ENCODE measurements at regions of chr3 and their contacts with region 1.

Region 1: DNA sequence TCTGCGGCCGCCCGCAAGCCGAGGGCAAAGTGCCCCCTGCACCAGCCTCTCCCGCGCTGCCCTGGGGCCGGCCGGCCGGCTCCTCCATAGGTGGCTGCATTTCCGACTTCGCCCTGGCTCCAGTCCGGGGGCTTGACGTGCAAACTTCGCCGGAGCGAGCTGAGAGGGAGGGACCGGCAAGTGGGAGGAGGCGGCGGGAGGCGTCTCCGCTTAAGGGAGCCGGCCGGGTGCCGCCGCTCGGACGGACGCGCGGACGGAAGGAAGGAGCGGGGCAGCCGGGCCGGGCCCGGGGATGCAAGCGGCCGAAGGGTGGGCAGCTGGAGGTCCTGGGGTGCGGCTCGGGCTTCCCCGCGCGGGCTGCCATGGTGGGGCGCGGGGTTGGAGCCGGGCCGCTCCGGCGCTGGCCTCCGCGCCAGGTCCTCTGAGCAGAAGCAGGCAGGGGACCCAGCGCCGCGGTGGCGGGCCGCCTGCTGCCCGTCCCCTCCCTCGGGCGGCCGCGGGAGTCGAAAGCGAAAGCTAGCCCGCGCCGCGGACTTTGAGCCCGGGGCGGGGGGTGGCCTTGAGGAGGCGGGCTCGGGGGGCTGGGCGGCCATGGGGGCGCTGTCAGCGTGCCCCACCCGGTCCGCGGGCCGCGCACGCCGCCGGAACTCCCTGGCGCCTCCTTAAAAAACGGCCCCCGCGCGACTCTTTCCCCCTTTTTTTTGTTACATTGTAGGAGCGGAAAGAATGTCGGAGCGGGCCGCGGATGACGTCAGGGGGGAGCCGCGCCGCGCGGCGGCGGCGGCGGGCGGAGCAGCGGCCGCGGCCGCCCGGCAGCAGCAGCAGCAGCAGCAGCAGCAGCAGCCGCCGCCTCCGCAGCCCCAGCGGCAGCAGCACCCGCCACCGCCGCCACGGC is at the start of gene SCAANT1:
- DNase-seq: peak; percentile 79
- H3K4me3 Mint-ChIP-seq: peak within 1 kb of the TSS; percentile 92
- H3K27ac Mint-ChIP-seq: peak within 1 kb of the TSS; percentile 96
- H3K4me1 Mint-ChIP-seq: peaks cover 52% of the 10 kb centered on the region
- H3K27me3 Mint-ChIP-seq: peaks cover 2% of the 10 kb centered on the region
- total RNA-seq, gene SCAANT1: not detected in 2 replicates

Region 2: DNA sequence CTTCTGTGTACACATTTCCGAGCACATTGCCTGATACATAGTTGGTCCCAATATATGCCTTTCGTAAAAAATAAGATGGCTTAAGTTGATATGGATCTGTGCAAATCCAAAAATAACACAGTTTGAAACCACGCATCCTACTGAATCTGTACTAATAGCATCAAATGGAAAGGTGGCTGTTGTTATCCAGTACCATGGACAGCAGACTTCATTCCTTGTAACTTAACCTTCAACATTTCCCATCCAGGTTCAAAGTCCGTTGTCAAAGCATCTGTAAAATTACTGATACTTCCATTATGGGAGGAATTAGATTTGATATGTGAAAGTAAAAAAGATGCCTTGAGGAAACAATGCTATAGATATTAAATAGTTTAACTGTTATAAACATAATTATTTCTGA is 158.6 kb before region 1 on chr3:
- intact Hi-C with region 1: no loop called
- DNase-seq: no peak
- H3K4me3 Mint-ChIP-seq: no peak overlapping the region
- H3K27ac Mint-ChIP-seq: no peak overlapping the region
- H3K4me1 Mint-ChIP-seq: no peaks in the 10 kb centered on the region
- H3K27me3 Mint-ChIP-seq: peaks cover 1% of the 10 kb centered on the region

Region 3: DNA sequence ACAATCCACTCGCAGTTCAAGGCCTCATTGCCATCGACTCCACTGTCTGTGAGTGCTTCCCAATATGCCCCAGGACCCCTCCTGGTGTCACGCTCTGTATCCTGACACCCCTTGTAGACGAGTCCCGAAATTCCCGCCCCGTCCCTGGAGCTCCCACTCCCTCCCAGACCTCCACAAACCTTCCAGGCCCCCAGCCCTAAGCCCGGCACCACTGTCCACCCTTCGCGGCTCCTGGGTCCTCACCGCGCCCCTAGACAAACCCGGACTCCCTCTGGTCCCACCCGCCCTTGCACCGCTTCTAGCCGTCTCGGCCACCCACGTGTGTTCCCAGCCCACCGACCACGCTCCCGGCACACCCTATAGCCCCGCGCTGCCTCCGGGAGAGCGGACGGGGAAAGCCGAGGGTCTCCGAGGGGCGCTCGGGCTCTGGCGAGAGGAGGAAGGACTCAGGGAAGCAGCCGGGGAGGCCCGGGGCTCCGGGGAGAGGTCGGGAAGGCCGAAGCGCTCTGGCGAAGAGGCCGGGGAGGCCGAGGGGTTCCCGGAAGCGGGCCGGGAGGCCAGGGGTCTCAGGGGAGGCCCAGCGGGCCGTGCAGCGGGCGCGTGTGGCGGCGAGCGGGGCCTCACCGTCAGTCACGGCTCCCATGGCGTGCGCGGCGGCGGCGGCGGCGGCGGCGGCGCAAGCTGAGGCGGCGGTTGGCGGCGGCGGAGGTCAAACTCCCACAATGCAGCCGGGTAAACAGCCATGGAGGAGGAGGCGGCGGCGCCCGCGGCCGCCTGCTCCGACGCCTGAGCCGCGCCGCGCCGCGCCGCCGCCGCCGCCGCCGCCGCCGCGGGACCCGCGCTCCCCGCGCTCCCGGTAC is 48.7 kb before region 1 on chr3 and contains the starts of genes ATXN7 and THOC7:
- intact Hi-C with region 1: loop called (anchors 1 kb)
- DNase-seq: peak; percentile 72
- H3K4me3 Mint-ChIP-seq: peak within 1 kb of the TSS; percentile 91
- H3K27ac Mint-ChIP-seq: peak within 1 kb of the TSS; percentile 94
- H3K4me1 Mint-ChIP-seq: peaks cover 67% of the 10 kb centered on the region
- H3K27me3 Mint-ChIP-seq: no peaks in the 10 kb centered on the region
- total RNA-seq, gene ATXN7: 40.7 and 48.2 TPM in 2 replicates
- total RNA-seq, gene THOC7: 100 and 106 TPM in 2 replicates

Region 4: GRCh38 chr3:63900459-63900858 is 11.7 kb before region 1 on chr3:
- intact Hi-C with region 1: loop called (anchors 1 kb)
- DNase-seq: no peak
- H3K4me3 Mint-ChIP-seq: no peak overlapping the region
- H3K27ac Mint-ChIP-seq: peak overlapping the region; percentile 32
- H3K4me1 Mint-ChIP-seq: peaks cover 36% of the 10 kb centered on the region
- H3K27me3 Mint-ChIP-seq: no peaks in the 10 kb centered on the region

Region 5: GRCh38 chr3:63934041-63934866 is 22.1 kb after region 1 on chr3:
- intact Hi-C with region 1: loop called (anchors 2 kb)
- DNase-seq: peak; percentile 9
- H3K4me3 Mint-ChIP-seq: peak overlapping the region; percentile 49
- H3K27ac Mint-ChIP-seq: peak overlapping the region; percentile 82
- H3K4me1 Mint-ChIP-seq: peaks cover 71% of the 10 kb centered on the region
- H3K27me3 Mint-ChIP-seq: no peaks in the 10 kb centered on the region

Region 6: DNA sequence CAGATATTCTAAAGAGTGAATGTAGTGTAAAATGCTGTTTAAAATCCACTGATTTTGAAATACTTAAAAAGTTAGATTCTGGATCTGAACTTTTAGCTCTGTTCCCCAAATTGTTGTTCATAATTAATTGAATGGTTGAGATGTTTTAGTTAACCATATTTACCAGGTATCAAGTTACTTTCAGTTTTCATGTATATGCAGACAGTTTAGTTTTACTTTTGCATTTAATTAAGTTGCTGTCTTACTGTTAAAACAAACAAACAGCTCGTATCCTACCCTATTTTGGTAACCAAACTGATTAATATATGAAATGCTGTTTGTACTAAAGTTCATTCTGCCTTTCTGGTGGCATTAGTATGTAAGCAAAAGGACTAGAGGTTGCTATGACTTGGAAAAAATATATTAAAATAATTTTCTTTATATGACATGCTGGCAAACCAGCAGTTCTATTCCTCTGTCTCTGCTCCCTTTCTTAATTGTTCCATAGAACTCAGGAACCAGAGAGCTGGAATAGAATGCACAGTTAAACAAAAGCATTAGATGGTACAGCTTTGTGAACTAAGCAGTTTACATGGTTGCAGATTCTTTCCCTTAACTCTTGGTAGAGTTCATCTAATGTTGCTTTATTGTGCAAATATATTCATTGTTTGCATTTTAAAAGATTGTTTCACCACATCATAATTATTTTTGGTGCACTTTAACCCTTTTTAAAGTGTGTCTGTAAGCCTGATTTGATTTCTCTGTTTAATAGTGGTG is 39.5 kb after region 1 on chr3:
- intact Hi-C with region 1: no loop called
- DNase-seq: no peak
- H3K4me3 Mint-ChIP-seq: peak overlapping the region; percentile 81
- H3K27ac Mint-ChIP-seq: peak overlapping the region; percentile 70
- H3K4me1 Mint-ChIP-seq: peaks cover 58% of the 10 kb centered on the region
- H3K27me3 Mint-ChIP-seq: no peaks in the 10 kb centered on the region

Region 7: DNA sequence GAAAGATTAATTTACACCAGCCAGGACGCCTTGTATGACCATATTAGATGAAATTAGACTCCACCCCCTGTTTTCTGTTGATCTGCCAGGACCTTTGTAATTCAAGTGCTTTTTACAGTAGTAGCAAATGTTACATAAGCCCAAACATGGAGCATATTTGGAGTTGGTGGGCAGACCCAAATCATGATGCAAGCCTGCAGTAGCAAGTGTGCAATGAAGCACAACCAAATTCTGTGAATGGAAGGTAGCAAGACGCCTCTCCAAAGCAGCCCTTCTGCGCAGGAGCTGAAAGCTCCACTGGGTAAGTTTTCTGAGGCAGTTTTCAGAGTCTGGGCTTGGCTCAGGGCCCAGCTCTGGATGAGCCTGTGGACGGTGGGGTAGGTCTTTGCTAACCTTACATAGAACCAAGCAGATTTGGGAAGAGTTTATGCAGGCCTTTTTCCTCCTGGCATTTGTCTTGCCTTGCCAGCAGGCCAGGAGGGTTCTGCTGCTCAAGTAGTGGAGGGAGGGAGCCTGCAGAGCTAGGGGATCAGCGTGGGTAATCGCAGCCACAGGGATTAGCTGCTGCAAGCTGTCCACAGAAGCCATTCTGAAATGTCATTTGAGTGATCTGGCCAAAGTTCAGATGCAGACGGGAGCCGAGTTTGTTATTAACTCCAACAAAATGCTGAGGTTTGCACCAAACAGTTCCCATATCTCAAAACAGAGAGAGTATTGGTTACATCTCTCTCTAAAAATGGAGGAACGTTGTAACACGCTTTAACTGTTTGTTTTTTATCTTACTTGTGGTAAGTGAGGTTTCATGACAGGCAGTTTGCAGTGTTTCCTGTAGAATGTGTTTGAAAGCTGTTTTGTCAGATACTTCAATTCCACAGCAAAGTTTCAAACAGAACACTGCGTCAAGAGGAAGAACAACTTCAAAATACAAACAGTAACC is 55.8 kb after region 1 on chr3:
- intact Hi-C with region 1: loop called (anchors 1 kb)
- DNase-seq: peak; percentile 33
- H3K4me3 Mint-ChIP-seq: peak overlapping the region; percentile 81
- H3K27ac Mint-ChIP-seq: peak overlapping the region; percentile 92
- H3K4me1 Mint-ChIP-seq: peaks cover 94% of the 10 kb centered on the region
- H3K27me3 Mint-ChIP-seq: no peaks in the 10 kb centered on the region

Region 8: GRCh38 chr3:63993653-63994079 is 81.5 kb after region 1 on chr3:
- intact Hi-C with region 1: loop called (anchors 1 kb)
- DNase-seq: peak; percentile 32
- H3K4me3 Mint-ChIP-seq: no peak overlapping the region
- H3K27ac Mint-ChIP-seq: peak overlapping the region; percentile 35
- H3K4me1 Mint-ChIP-seq: peaks cover 30% of the 10 kb centered on the region
- H3K27me3 Mint-ChIP-seq: no peaks in the 10 kb centered on the region

Region 9: DNA sequence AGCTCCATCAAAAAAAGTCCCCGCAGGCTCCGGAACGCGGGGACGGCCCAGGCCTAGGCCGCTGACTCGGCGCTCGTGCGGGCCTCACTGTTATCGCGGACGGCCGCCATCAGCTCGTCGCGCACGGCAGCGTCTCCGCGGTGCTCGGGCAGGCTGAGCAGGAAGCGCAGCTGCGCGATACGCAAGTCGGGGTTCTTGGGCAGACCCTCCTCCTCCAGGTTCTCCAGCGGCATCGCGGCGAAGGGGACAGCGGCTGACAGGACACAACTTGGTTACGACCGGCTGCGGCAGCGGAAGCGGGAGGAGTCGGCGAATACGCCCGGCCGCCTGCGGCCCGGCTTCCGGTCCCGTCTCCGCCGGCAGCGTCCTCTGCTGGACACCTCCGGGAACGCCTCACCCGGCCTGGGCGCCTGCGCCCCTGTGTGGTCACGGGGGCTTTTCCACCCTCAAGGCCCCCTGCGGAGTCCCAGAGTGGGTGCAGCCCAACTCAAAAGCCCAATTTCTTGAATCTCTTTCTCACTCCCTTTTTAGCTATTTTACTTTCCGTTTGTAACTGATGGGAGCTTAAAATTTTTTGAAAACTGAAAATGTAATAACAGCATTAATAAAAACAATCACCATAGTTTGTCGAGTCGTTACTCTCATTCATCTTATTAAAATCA is 111.2 kb after region 1 on chr3 and contains the start of gene PSMD6:
- intact Hi-C with region 1: loop called (anchors 1 kb)
- DNase-seq: peak; percentile 93
- H3K4me3 Mint-ChIP-seq: peak within 1 kb of the TSS; percentile 81
- H3K27ac Mint-ChIP-seq: peak within 1 kb of the TSS; percentile 88
- H3K4me1 Mint-ChIP-seq: peaks cover 30% of the 10 kb centered on the region
- H3K27me3 Mint-ChIP-seq: peaks cover 12% of the 10 kb centered on the region
- total RNA-seq, gene PSMD6: 133 and 137 TPM in 2 replicates

Measured in activated T-helper 1 cell treated with anti-CD3 and anti-CD28 coated beads, Interleukin-12 subunit alpha, Interleukin-12 subunit beta, Interleukin-2, Interleukin-4 antibody, amounts not matched to agents 30 ng/mL and 10 ng/mL and 1 ng/mL, durations not matched to agents 14 hours and 24 hours and 36 hours (primary cell).